CD14-positive monocyte (primary cell): ENCODE measurements at regions of chr1 and their contacts with region 1.

Region 1: GRCh38 chr1:2525920-2526823 is at the start of gene PANK4:
- DNase-seq: peak; percentile 89
- H3K4me3 ChIP-seq: peak within 1 kb of the TSS; percentile 64 to 91 (median 67)
- H3K4me3 Mint-ChIP-seq: peak within 1 kb of the TSS; percentile 88 to 92
- H3K27ac ChIP-seq: peak within 1 kb of the TSS; percentile 34 to 74
- H3K27ac Mint-ChIP-seq: peak within 1 kb of the TSS; percentile 64 to 98 (median 94)
- H3K4me1 ChIP-seq: peaks cover 31 to 42% of the 10 kb centered on the region in 2 donors
- H3K4me1 Mint-ChIP-seq: peaks cover 31% of the 10 kb centered on the region
- H3K27me3 ChIP-seq: peaks cover 25 to 37% of the 10 kb centered on the region in 2 donors
- H3K27me3 Mint-ChIP-seq: peaks cover 27 to 45% (median 37%) of the 10 kb centered on the region in 3 donors
- CTCF ChIP-seq: no peak
- polyA plus RNA-seq, gene PANK4: 11.9 to 30.2 (median 13.7) TPM

Region 2: DNA sequence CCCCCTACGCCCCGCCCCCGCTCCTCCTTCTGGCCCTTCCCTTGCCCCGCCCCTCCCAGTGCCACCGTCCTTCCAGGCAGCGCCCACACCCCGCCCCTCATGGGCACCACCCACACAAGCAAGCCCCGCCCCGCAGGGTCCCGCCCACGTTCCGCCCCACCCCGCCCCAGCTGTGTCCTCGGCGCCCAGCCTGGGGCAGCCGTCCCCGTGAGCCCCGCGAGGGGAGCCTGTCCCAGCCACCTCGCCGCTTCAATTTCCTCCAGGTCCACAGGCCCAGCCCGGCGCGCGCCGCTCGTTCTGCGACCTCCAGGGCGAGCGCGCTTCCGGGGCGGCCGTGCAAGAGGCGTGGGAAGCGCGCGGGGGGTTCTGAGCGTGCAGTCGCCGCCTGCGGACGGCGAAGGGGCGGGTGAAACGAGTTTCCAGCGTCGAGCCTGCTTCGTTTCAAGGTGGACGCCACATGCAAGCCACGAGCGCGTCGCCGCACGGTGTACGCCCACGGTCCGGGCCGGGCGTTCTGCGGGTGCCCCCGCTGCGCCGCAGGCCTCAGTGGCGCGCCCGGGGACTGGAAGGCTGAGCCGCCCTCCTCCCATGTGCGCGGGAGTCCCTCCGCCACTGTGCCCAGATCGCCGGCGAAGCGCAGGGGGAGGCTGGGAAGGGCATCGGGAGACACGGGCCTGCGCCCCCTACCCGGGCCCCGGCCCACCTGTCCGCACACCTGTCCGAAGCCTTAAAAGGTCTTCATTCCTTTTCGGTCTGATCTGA is 320.8 kb before region 1 on chr1:
- intact Hi-C with region 1: loop called in 1 of 2 experiments (anchors 10 kb)
- DNase-seq: peak; percentile 88 to 96 (median 93)
- H3K4me3 ChIP-seq: peak overlapping the region; percentile 18 to 74 (median 36)
- H3K4me3 Mint-ChIP-seq: peak overlapping the region; percentile 59 to 76
- H3K27ac ChIP-seq: no peak overlapping the region
- H3K27ac Mint-ChIP-seq: no peak overlapping the region
- H3K4me1 ChIP-seq: peaks cover 12 to 19% of the 10 kb centered on the region in 2 donors
- H3K4me1 Mint-ChIP-seq: peaks cover 9% of the 10 kb centered on the region
- H3K27me3 ChIP-seq: peaks cover 0 to 9% of the 10 kb centered on the region in 2 donors
- H3K27me3 Mint-ChIP-seq: peaks cover 18 to 37% (median 23%) of the 10 kb centered on the region in 3 donors
- CTCF ChIP-seq: no peak

Region 3: GRCh38 chr1:2391041-2391930 is 134.9 kb before region 1 on chr1 and contains the starts of genes MORN1 and RER1:
- intact Hi-C with region 1: loop called (anchors 5 kb)
- DNase-seq: peak; percentile 99 to 100 (median 99)
- H3K4me3 ChIP-seq: peak within 1 kb of the TSS; percentile 50 to 94 (median 78)
- H3K4me3 Mint-ChIP-seq: peak within 1 kb of the TSS; percentile 81 to 90
- H3K27ac ChIP-seq: peak within 1 kb of the TSS in 1 of 2 donors; percentile 79
- H3K27ac Mint-ChIP-seq: peak within 1 kb of the TSS; percentile 57 to 89 (median 85)
- H3K4me1 ChIP-seq: peaks cover 14 to 26% of the 10 kb centered on the region in 2 donors
- H3K4me1 Mint-ChIP-seq: peaks cover 30% of the 10 kb centered on the region
- H3K27me3 ChIP-seq: no peaks in the 10 kb centered on the region
- H3K27me3 Mint-ChIP-seq: no peaks in the 10 kb centered on the region
- CTCF ChIP-seq: no peak
- polyA plus RNA-seq, gene MORN1: 1.5 to 3.0 (median 1.7) TPM
- polyA plus RNA-seq, gene RER1: 98.3 to 235 (median 193) TPM

Region 4: GRCh38 chr1:2514863-2515762 is 11.1 kb before region 1 on chr1:
- intact Hi-C with region 1: no loop called
- DNase-seq: no peak
- H3K4me3 ChIP-seq: no peak overlapping the region
- H3K4me3 Mint-ChIP-seq: no peak overlapping the region
- H3K27ac ChIP-seq: no peak overlapping the region
- H3K27ac Mint-ChIP-seq: peak overlapping the region in 1 of 7 donors; percentile 5
- H3K4me1 ChIP-seq: no peaks in the 10 kb centered on the region
- H3K4me1 Mint-ChIP-seq: no peaks in the 10 kb centered on the region
- H3K27me3 ChIP-seq: no peaks in the 10 kb centered on the region
- H3K27me3 Mint-ChIP-seq: peaks cover 0 to 2% (median 0%) of the 10 kb centered on the region in 3 donors
- CTCF ChIP-seq: no peak

Region 5: GRCh38 chr1:2642560-2643413 is 116.6 kb after region 1 on chr1:
- intact Hi-C with region 1: loop called (anchors 5 kb)
- DNase-seq: peak; percentile 79 to 89 (median 84)
- H3K4me3 ChIP-seq: peak overlapping the region; percentile 54 to 86 (median 56)
- H3K4me3 Mint-ChIP-seq: peak overlapping the region; percentile 80 to 91
- H3K27ac ChIP-seq: peak overlapping the region in 1 of 2 donors; percentile 88
- H3K27ac Mint-ChIP-seq: peak overlapping the region in 4 of 7 donors; percentile 8 to 67 (median 55)
- H3K4me1 ChIP-seq: peaks cover 14 to 21% of the 10 kb centered on the region in 2 donors
- H3K4me1 Mint-ChIP-seq: peaks cover 8% of the 10 kb centered on the region
- H3K27me3 ChIP-seq: peaks cover 0 to 4% of the 10 kb centered on the region in 2 donors
- H3K27me3 Mint-ChIP-seq: peaks cover 5 to 20% (median 7%) of the 10 kb centered on the region in 3 donors
- CTCF ChIP-seq: no peak